SK-N-SH (cell line): ENCODE measurements at regions of chr11 and their contacts with region 1.

Region 1: GRCh38 chr11:57456960-57457642 is 3.2 kb upstream of the RTN4RL2 start:
- DNase-seq: peak; percentile 85
- H3K4me3 ChIP-seq: no peak overlapping the region; a peak in 1 of 4 replicates
- H3K27ac ChIP-seq: no peak overlapping the region
- H3K4me1 ChIP-seq: peaks cover 11 to 22% of the 10 kb centered on the region in 2 experiments; a peak in 2 of 4 replicates
- H3K27me3 ChIP-seq: peaks cover 33% of the 10 kb centered on the region
- CTCF ChIP-seq: peak; percentile 87
- EP300 ChIP-seq: no peak
- RAD21 ChIP-seq: peak; percentile 92

Region 2: DNA sequence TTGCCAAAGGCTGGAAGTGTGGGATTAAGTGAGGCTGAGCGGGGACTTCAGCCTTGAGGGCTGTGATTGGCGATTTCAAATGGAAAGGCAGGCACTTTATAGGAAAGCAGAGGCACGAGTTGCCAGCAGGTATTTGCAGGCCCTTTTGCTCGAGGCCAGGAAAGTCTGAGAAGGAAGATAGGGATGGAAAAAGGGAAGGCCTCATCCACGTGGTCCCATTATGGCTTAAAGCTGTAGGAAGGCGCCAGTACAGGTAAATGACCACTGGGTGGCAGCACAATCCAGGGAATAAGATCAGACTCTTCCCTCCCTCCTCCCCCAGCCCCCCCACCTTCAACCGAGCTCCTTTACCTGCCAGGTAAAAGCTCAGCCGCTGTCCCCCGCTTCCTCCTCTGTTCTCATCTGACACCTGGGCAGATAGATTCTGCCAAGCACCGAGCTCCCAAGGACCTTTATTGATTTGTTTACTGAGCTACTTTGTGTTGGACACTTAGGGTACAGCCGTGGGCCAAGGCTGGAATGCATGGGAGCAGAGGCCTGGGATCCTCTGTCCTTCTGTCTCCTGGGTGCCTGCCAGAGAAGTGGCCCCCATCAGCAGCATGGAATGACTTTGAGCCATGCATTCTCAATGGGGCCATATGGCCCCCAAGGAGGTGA is 111.4 kb before region 1 on chr11:
- CTCF ChIA-PET with region 1: interaction called, 42 read pairs
- POLR2A ChIA-PET with region 1: no interaction called
- DNase-seq: peak; percentile 86
- H3K4me3 ChIP-seq: no peak overlapping the region; a peak in 1 of 4 replicates
- H3K27ac ChIP-seq: no peak overlapping the region; a peak in 1 of 4 replicates
- H3K4me1 ChIP-seq: peaks cover 0 to 2% of the 10 kb centered on the region in 2 experiments; a peak in 1 of 4 replicates
- H3K27me3 ChIP-seq: no peaks in the 10 kb centered on the region
- CTCF ChIP-seq: peak; percentile 68
- EP300 ChIP-seq: no peak
- RAD21 ChIP-seq: peak; percentile 75

Region 3: GRCh38 chr11:57444362-57445121 is 12.6 kb before region 1 on chr11:
- CTCF ChIA-PET with region 1: interaction called, 43 read pairs
- POLR2A ChIA-PET with region 1: no interaction called
- DNase-seq: no peak
- H3K4me3 ChIP-seq: no peak overlapping the region
- H3K27ac ChIP-seq: no peak overlapping the region
- H3K4me1 ChIP-seq: no peaks in the 10 kb centered on the region
- H3K27me3 ChIP-seq: no peaks in the 10 kb centered on the region; the same call in 1 of the 2 replicates
- CTCF ChIP-seq: no peak
- EP300 ChIP-seq: no peak
- RAD21 ChIP-seq: no peak

Region 4: DNA sequence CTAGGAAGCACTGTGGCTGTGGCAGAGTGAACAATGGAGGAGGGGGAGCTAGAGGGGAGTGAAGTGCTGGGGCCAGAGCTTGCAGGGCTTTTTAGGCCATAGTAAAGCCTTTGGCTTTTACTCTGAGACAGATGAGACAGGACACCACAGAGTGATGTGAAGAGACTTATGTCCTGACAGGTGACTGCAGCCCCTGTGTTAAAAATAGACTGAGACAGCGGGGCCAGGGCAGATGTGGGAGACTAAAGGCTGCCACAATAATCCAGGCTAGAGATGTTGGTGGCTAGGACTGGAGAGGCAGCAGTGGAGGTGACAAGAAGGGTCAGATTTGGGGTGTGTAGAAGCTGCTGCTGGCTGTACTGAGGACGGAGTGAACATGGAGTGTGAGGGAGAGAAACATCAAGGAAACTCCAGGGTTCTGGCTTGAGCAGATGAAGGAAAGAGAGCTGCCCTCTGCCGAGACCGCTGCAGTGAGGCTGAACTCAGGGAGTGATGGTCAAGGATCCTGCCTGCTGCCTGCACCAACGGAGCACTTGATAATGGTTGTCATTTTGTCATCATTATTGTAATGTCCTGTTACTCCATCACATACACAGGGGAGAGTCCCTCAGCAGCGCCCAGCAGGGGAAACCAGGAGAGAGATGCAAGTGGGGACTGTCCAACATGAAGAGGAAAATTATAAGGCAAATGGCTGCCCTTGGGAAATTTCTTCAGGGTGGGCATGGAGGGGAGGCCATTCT is 31.0 kb after region 1 on chr11:
- CTCF ChIA-PET with region 1: interaction called, 306 read pairs
- POLR2A ChIA-PET with region 1: no interaction called
- DNase-seq: no peak
- H3K4me3 ChIP-seq: no peak overlapping the region
- H3K27ac ChIP-seq: no peak overlapping the region
- H3K4me1 ChIP-seq: peaks cover 4 to 6% of the 10 kb centered on the region in 2 experiments; a peak in 2 of 4 replicates
- H3K27me3 ChIP-seq: peaks cover 4% of the 10 kb centered on the region; the same call in 1 of the 2 replicates
- CTCF ChIP-seq: no peak
- EP300 ChIP-seq: no peak
- RAD21 ChIP-seq: no peak

Region 5: GRCh38 chr11:57515332-57516060 is 58.4 kb after region 1 on chr11 and contains the start of gene SLC43A1:
- CTCF ChIA-PET with region 1: interaction called, 54 read pairs
- POLR2A ChIA-PET with region 1: no interaction called
- DNase-seq: peak; percentile 74
- H3K4me3 ChIP-seq: peak within 1 kb of the TSS; percentile 69 to 78
- H3K27ac ChIP-seq: no peak within 1 kb of the TSS; a peak in 1 of 4 replicates
- H3K4me1 ChIP-seq: peaks cover 0 to 9% of the 10 kb centered on the region in 2 experiments; a peak in 1 of 4 replicates
- H3K27me3 ChIP-seq: no peaks in the 10 kb centered on the region
- CTCF ChIP-seq: no peak
- EP300 ChIP-seq: no peak
- RAD21 ChIP-seq: no peak
- polyA plus RNA-seq, gene SLC43A1: 3.7 and 4.4 TPM in 2 replicates

Region 6: GRCh38 chr11:57567515-57568329 is 110.6 kb after region 1 on chr11 and contains the start of gene UBE2L6:
- CTCF ChIA-PET with region 1: interaction called, 16 read pairs
- POLR2A ChIA-PET with region 1: no interaction called
- DNase-seq: peak; percentile 91
- H3K4me3 ChIP-seq: peak within 1 kb of the TSS; percentile 82 to 96
- H3K27ac ChIP-seq: peak within 1 kb of the TSS; percentile 58 to 83; a peak in 3 of 4 replicates
- H3K4me1 ChIP-seq: peaks cover 0 to 12% of the 10 kb centered on the region in 2 experiments; a peak in 1 of 4 replicates
- H3K27me3 ChIP-seq: no peaks in the 10 kb centered on the region
- CTCF ChIP-seq: no peak; the same call in 1 of the 2 replicates
- EP300 ChIP-seq: no peak
- RAD21 ChIP-seq: no peak
- polyA plus RNA-seq, gene UBE2L6: 65.9 and 77.0 TPM in 2 replicates